ENCODE measurements at regions of chr10 and their contacts with region 1.

Region 1: GRCh38 chr10:100046021-100046486 is 35.6 kb downstream of the CPN1 start:
- DNase-seq: peak; percentile 67 to 86
- ATAC-seq: peak; percentile 94
- H3K4me3 ChIP-seq: no peak overlapping the region
- H3K27ac ChIP-seq: peak overlapping the region; percentile 25 to 78; a peak in 5 of 6 replicates
- H3K4me1 ChIP-seq: peaks cover 26% of the 10 kb centered on the region
- CTCF ChIP-seq: peak; percentile 97
- EP300 ChIP-seq: 0 out of 5 replicates have a peak, but pooled peaks of 1 of the 2 experiments have one; percentile 4
- POLR2A ChIP-seq: no peak
- RAD21 ChIP-seq: peak; percentile 94 to 96

Region 2: GRCh38 chr10:99845837-99846382 is 200.1 kb before region 1 on chr10:
- CTCF ChIA-PET with region 1: interaction called, 139 read pairs
- POLR2A ChIA-PET with region 1: no interaction called
- DNase-seq: peak; percentile 60 to 92
- ATAC-seq: peak; percentile 72 to 78
- H3K4me3 ChIP-seq: no peak overlapping the region
- H3K27ac ChIP-seq: peak overlapping the region in 1 of 2 experiments; percentile 31; a peak in 2 of 6 replicates
- H3K4me1 ChIP-seq: peaks cover 56% of the 10 kb centered on the region
- CTCF ChIP-seq: peak; percentile 92
- EP300 ChIP-seq: no peak
- POLR2A ChIP-seq: no peak
- RAD21 ChIP-seq: peak; percentile 81 to 82

Region 3: DNA sequence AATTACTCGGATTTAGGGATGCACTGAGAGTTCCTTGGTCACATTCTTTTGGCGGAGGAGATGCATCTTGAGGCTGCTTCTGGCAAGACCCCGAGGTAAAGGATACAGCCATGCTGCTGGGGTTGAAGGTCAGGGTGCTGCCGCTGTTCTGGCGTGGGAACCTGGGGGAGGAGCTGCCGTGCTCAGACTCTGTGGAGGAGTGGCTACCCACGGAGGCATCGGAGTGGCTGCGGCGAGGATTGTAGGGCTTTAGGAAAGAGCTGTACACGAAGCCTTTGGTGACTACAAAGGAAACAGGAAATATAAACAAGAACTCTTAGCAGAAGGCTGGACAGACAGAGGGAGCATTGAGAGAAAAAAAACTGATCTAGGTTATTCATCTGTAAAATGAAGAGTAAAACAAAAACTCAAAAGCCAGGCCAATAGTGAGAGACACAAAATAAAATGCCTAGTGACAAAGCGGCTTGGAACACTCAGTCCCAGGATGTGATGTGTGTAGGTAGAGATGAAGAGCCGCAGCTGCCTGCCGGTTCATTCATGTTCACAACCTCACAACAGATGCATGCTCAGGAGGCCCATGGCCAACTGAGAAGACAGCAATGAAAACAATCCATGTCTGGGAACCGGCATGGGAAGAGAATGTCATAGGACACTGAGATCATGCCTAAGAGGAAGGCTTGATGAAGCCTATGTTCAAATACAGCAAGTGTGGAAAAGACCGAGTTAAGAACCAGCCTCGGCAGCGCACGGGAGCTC is 165.8 kb before region 1 on chr10:
- CTCF ChIA-PET with region 1: interaction called, 11 read pairs
- POLR2A ChIA-PET with region 1: no interaction called
- DNase-seq: no peak
- ATAC-seq: no peak
- H3K4me3 ChIP-seq: no peak overlapping the region
- H3K27ac ChIP-seq: no peak overlapping the region
- H3K4me1 ChIP-seq: no peaks in the 10 kb centered on the region
- CTCF ChIP-seq: no peak
- EP300 ChIP-seq: no peak
- POLR2A ChIP-seq: no peak
- RAD21 ChIP-seq: no peak

Region 4: DNA sequence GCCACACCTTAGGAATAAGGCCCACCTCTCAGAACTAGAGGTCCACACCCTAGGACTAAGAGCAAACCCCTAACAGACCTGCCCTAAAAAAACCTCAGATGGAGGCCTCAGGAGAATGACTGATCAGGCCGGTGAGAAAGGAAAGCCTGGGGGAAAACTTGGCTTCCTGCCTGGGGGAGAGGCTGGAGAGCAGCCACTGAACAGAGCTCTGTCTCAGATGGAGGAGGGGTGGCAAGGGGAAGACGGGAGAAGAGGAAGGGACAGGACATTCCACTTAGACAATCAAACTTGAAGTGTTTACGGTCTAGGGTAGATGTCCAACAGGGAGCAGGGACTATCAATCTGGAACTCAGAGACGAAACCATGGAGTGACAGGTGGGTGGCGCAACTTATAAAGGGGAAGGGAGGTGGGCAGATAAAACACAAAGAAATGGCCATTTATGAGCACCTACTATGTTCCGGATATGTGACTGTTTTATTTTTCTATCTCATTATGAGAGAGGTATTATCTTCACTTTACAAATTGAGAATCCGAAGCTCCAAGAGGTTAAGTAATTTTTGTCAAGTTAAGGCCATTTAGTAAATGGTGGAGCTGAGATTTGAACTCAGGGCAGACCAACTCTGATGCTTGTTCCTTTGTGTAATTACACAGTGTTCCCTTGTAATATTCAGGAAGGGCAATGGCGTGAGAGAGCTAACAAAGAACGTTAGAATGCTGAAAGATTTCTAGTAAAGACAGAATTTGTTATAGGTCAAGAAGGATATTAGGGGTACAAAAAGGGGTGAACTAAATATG is 118.9 kb before region 1 on chr10:
- CTCF ChIA-PET with region 1: interaction called, 15 read pairs
- POLR2A ChIA-PET with region 1: no interaction called
- DNase-seq: peak in 1 of 2 experiments; percentile 34
- ATAC-seq: peak in 1 of 2 experiments; percentile 23; a peak in 3 of 6 replicates
- H3K4me3 ChIP-seq: peak overlapping the region; percentile 42
- H3K27ac ChIP-seq: peak overlapping the region; percentile 84
- H3K4me1 ChIP-seq: peaks cover 70% of the 10 kb centered on the region
- CTCF ChIP-seq: no peak
- EP300 ChIP-seq: no peak
- POLR2A ChIP-seq: no peak
- RAD21 ChIP-seq: no peak

Region 5: GRCh38 chr10:100020142-100020885 is 25.7 kb before region 1 on chr10:
- CTCF ChIA-PET with region 1: interaction called, 36 read pairs
- POLR2A ChIA-PET with region 1: no interaction called
- DNase-seq: peak; percentile 46 to 86
- ATAC-seq: peak; percentile 78 to 82
- H3K4me3 ChIP-seq: 0 out of 3 replicates have a peak overlapping the region, but pooled peaks have one; percentile 14
- H3K27ac ChIP-seq: peak overlapping the region; percentile 80 to 93
- H3K4me1 ChIP-seq: peaks cover 53% of the 10 kb centered on the region
- CTCF ChIP-seq: no peak
- EP300 ChIP-seq: peak; percentile 22 to 42; a peak in 2 of 5 replicates
- POLR2A ChIP-seq: no peak
- RAD21 ChIP-seq: peak in 1 of 2 experiments; percentile 16; a peak in 1 of 5 replicates

Region 6: GRCh38 chr10:100076750-100077149 is 30.7 kb after region 1 on chr10:
- CTCF ChIA-PET with region 1: interaction called, 10 read pairs
- POLR2A ChIA-PET with region 1: no interaction called
- DNase-seq: no peak
- ATAC-seq: no peak
- H3K4me3 ChIP-seq: no peak overlapping the region
- H3K27ac ChIP-seq: no peak overlapping the region
- H3K4me1 ChIP-seq: peaks cover 2% of the 10 kb centered on the region; the same call in 1 of the 3 replicates
- CTCF ChIP-seq: no peak
- EP300 ChIP-seq: no peak
- POLR2A ChIP-seq: no peak
- RAD21 ChIP-seq: no peak

Region 7: DNA sequence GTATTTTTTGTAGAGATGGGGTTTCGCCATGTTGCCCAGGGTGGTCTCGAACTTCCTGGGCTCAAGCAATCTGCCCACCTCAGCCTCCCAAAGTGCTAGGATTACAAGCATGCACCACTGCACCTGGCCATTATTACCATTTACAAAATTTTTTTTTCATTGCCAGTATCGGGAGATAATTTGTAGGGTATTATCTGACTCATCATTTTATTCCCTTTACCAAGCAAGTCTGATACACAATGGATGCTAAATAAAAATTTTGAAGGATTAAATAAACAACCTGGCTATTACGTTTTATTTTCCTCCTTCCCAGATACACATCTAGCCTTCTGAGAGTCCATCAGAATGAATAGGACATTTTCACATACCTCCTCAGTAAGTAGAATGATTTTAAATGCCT is 73.7 kb after region 1 on chr10:
- CTCF ChIA-PET with region 1: no interaction called
- POLR2A ChIA-PET with region 1: no interaction called
- DNase-seq: no peak
- ATAC-seq: no peak
- H3K4me3 ChIP-seq: no peak overlapping the region
- H3K27ac ChIP-seq: no peak overlapping the region
- H3K4me1 ChIP-seq: no peaks in the 10 kb centered on the region
- CTCF ChIP-seq: no peak
- EP300 ChIP-seq: no peak
- POLR2A ChIP-seq: no peak
- RAD21 ChIP-seq: no peak

Measured in A549 (cell line).